ENCODE measurements at regions of chr12 and their contacts with region 1.

Region 1: DNA sequence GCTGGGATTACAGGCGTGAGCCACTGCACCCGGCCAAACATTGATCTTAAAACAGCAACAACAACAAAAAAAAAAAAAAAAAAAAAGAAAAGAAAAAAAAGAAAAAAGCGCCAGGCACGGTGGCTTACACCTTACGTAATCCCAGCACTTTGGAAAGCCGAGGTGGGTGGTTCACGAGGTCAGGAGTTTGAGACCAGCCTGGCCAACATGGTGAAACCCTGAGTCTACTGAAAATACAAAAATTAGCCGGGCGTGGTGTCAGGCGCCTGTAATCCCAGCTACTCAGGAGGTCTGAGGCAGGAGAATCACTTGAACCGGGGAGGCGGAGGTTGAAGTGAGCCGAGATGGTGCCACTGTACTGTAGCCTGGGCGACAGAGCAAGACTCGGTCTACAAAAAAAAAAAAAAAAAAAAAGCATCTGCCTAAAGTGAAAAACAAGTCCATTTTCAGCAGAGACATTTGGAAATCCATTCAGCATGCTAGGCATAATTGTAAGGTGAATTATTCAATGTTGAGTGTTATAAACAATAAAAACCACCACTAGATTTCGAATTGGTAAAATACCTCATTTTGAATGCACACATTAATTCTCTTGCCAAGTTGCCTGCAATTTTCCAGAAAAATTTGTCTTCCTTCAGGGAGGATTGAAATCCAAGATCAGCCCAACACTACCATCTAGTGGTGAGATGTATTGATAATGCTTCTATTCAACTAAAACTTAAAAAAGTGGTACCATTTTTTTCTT is 8.0 kb upstream of the CERS5 start:
- DNase-seq: peak; percentile 44 to 71 (median 64)
- H3K4me3 ChIP-seq: no peak overlapping the region
- H3K4me3 Mint-ChIP-seq: no peak overlapping the region
- H3K27ac ChIP-seq: no peak overlapping the region
- H3K27ac Mint-ChIP-seq: peak overlapping the region in 2 of 7 donors; percentile 13 to 49
- H3K4me1 ChIP-seq: no peaks in the 10 kb centered on the region
- H3K4me1 Mint-ChIP-seq: peaks cover 0 to 2% (median 0%) of the 10 kb centered on the region in 4 donors
- H3K27me3 ChIP-seq: no peaks in the 10 kb centered on the region
- H3K27me3 Mint-ChIP-seq: no peaks in the 10 kb centered on the region

Region 2: GRCh38 chr12:50187084-50187900 is 12.1 kb after region 1 on chr12:
- CTCF ChIA-PET with region 1: interaction called, 33 read pairs
- POLR2A ChIA-PET with region 1: no interaction called
- intact Hi-C with region 1: no loop called
- DNase-seq: no peak
- H3K4me3 ChIP-seq: no peak overlapping the region
- H3K4me3 Mint-ChIP-seq: no peak overlapping the region
- H3K27ac ChIP-seq: no peak overlapping the region
- H3K27ac Mint-ChIP-seq: peak overlapping the region in 6 of 7 donors; percentile 14 to 80 (median 54)
- H3K4me1 ChIP-seq: peaks cover 38% of the 10 kb centered on the region
- H3K4me1 Mint-ChIP-seq: peaks cover 14 to 41% (median 23%) of the 10 kb centered on the region in 4 donors
- H3K27me3 ChIP-seq: no peaks in the 10 kb centered on the region
- H3K27me3 Mint-ChIP-seq: no peaks in the 10 kb centered on the region

Measured in CD4-positive, alpha-beta memory T cell (primary cell).